Stomach (tissue), 19 donors: ENCODE measurements at regions of chr5 and their contacts with region 1.

Region 1: GRCh38 chr5:5141625-5142532 is 1.7 kb downstream of the ADAMTS16 start:
- DNase-seq: peak; percentile 68 to 83
- H3K4me3 ChIP-seq: peak overlapping the region in 1 of 4 donors; percentile 37
- H3K27ac ChIP-seq: no peak overlapping the region
- H3K4me1 ChIP-seq: peaks cover 14 to 27% (median 20%) of the 10 kb centered on the region in 4 donors
- H3K27me3 ChIP-seq: peaks cover 13 to 45% (median 24%) of the 10 kb centered on the region in 3 donors
- CTCF ChIP-seq: peak in 5 of 7 experiments; percentile 33 to 79 (median 71)
- EP300 ChIP-seq: no peak
- POLR2A ChIP-seq: no peak

Region 2: GRCh38 chr5:3980156-3980555 is 1161.7 kb before region 1 on chr5:
- intact Hi-C with region 1: no loop called
- DNase-seq: peak in 1 of 2 donors; percentile 9
- H3K4me3 ChIP-seq: no peak overlapping the region
- H3K27ac ChIP-seq: no peak overlapping the region
- H3K4me1 ChIP-seq: no peaks in the 10 kb centered on the region
- H3K27me3 ChIP-seq: no peaks in the 10 kb centered on the region
- CTCF ChIP-seq: no peak
- EP300 ChIP-seq: no peak
- POLR2A ChIP-seq: no peak

Region 3: DNA sequence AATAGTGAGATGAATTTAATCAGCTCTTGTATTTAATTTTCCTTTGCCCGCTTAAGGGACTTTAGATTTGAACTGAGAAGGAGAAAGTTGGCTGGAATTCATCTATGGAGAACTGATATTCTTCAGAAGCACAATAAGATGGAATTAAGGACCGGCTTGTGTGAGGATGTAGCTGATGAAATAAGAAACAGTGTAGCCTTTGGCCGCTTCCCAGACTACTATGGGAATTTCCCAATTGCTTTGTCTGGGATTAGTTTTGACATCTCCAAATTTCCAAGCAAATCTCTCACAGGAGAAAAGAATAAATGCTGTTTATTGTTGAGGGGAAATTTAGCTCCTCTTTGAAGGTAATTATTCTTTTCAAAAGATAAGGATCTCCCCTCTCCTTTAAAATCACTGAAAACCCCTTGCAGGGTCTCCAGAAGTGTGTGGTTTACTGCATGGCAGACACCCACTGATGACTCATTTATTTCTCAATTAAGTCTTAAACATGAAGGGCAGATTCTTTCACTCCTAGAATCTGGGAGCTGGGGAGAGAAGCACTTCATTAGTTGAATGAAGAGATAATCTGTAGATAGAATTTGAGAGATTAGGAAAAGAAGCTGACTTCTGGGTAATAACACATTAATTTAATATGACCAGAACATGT is 608.3 kb before region 1 on chr5:
- intact Hi-C with region 1: no loop called
- DNase-seq: peak in 1 of 2 donors; percentile 14
- H3K4me3 ChIP-seq: no peak overlapping the region
- H3K27ac ChIP-seq: no peak overlapping the region
- H3K4me1 ChIP-seq: no peaks in the 10 kb centered on the region
- H3K27me3 ChIP-seq: no peaks in the 10 kb centered on the region
- CTCF ChIP-seq: no peak
- EP300 ChIP-seq: no peak
- POLR2A ChIP-seq: no peak

Region 4: GRCh38 chr5:5398046-5398445 is 256.2 kb after region 1 on chr5:
- intact Hi-C with region 1: loop called (anchors 5 kb)
- DNase-seq: no peak
- H3K4me3 ChIP-seq: no peak overlapping the region
- H3K27ac ChIP-seq: no peak overlapping the region
- H3K4me1 ChIP-seq: no peaks in the 10 kb centered on the region
- H3K27me3 ChIP-seq: no peaks in the 10 kb centered on the region
- CTCF ChIP-seq: no peak
- EP300 ChIP-seq: no peak
- POLR2A ChIP-seq: no peak

Region 5: GRCh38 chr5:5419294-5420210 is 277.7 kb after region 1 on chr5:
- intact Hi-C with region 1: loop called (anchors 5 kb)
- DNase-seq: peak in 1 of 2 donors; percentile 74
- H3K4me3 ChIP-seq: no peak overlapping the region
- H3K27ac ChIP-seq: no peak overlapping the region
- H3K4me1 ChIP-seq: peaks cover 23 to 41% (median 32%) of the 10 kb centered on the region in 4 donors
- H3K27me3 ChIP-seq: no peaks in the 10 kb centered on the region
- CTCF ChIP-seq: peak in 5 of 7 experiments; percentile 39 to 83 (median 65)
- EP300 ChIP-seq: no peak
- POLR2A ChIP-seq: no peak